Spleen (tissue), 13 donors: ENCODE measurements at regions of chr16 and their contacts with region 1.

Region 1: DNA sequence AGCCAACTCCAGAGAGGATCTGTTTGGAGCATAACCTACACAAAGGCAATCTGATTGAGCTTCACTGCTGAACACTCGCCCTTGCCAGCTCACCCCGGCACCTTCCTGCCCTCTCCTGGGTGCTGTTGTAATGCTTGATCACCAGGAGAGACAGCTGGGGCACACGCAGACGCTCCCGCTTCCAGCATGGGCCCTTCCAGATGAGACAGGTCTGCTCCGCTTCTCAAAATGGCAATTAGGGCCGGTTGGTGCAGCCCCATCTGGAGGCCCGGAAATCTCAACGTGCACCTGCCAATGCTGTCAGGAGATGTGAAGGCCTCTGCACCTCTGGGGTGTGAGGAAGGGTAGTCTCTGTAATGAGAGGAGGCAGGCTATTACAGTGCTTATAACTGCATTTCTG is 206.1 kb downstream of the ABCC12 start:
- DNase-seq: no peak
- H3K4me3 ChIP-seq: no peak overlapping the region
- H3K27ac ChIP-seq: no peak overlapping the region
- H3K4me1 ChIP-seq: peaks cover 0 to 5% (median 0%) of the 10 kb centered on the region in 6 donors
- H3K27me3 ChIP-seq: no peaks in the 10 kb centered on the region
- CTCF ChIP-seq: no peak
- POLR2A ChIP-seq: no peak

Region 2: DNA sequence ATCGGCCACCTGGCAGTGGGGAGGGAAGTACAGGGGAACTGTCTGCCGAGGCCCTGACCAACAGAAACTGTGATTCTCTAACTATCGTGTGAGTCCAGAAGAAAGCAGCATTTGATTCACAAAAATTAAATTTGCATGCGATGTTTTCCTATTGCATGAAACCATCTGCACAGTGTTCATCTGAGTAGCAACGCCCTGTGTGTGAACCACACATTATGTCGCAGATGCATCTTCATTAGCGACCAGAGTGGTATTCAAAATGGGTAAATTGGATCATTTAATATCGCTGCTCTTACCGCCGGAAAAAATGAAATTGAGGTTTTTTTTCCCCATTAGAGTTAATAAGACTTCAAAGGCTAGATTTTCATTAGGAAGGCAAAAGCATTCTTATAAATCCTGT is 54.6 kb before region 1 on chr16:
- intact Hi-C with region 1: loop called (anchors 10 kb)
- DNase-seq: no peak
- H3K4me3 ChIP-seq: no peak overlapping the region
- H3K27ac ChIP-seq: no peak overlapping the region
- H3K4me1 ChIP-seq: peaks cover 0 to 6% (median 0%) of the 10 kb centered on the region in 6 donors
- H3K27me3 ChIP-seq: peaks cover 0 to 25% (median 0%) of the 10 kb centered on the region in 7 donors
- CTCF ChIP-seq: no peak
- POLR2A ChIP-seq: no peak